Activated CD8-positive, alpha-beta T cell treated with anti-CD3 and anti-CD28 coated beads for 36 hours (primary cell): ENCODE measurements at regions of chr6 and their contacts with region 1.

Region 1: GRCh38 chr6:134822920-134823709 is 126.8 kb downstream of the ALDH8A1 start:
- DNase-seq: peak; percentile 51
- ATAC-seq: peak; percentile 90
- H3K4me3 Mint-ChIP-seq: no peak overlapping the region
- H3K27ac Mint-ChIP-seq: no peak overlapping the region
- H3K4me1 Mint-ChIP-seq: no peaks in the 10 kb centered on the region
- H3K27me3 Mint-ChIP-seq: peaks cover 3% of the 10 kb centered on the region
- CTCF ChIP-seq: peak; percentile 93

Region 2: GRCh38 chr6:134111062-134111677 is 711.9 kb before region 1 on chr6:
- CTCF ChIA-PET with region 1: interaction called, 12 read pairs
- POLR2A ChIA-PET with region 1: no interaction called
- intact Hi-C with region 1: no loop called
- DNase-seq: peak; percentile 66
- ATAC-seq: peak; percentile 85
- H3K4me3 Mint-ChIP-seq: no peak overlapping the region
- H3K27ac Mint-ChIP-seq: no peak overlapping the region
- H3K4me1 Mint-ChIP-seq: peaks cover 4% of the 10 kb centered on the region
- H3K27me3 Mint-ChIP-seq: peaks cover 7% of the 10 kb centered on the region
- CTCF ChIP-seq: peak; percentile 88

Region 3: GRCh38 chr6:134123666-134124208 is 699.4 kb before region 1 on chr6:
- CTCF ChIA-PET with region 1: interaction called, 25 read pairs
- POLR2A ChIA-PET with region 1: no interaction called
- intact Hi-C with region 1: loop called (anchors 10 kb)
- DNase-seq: peak; percentile 30
- ATAC-seq: peak; percentile 90
- H3K4me3 Mint-ChIP-seq: no peak overlapping the region
- H3K27ac Mint-ChIP-seq: no peak overlapping the region
- H3K4me1 Mint-ChIP-seq: peaks cover 2% of the 10 kb centered on the region
- H3K27me3 Mint-ChIP-seq: no peaks in the 10 kb centered on the region
- CTCF ChIP-seq: peak; percentile 91

Region 4: GRCh38 chr6:134145786-134146185 is 677.3 kb before region 1 on chr6:
- CTCF ChIA-PET with region 1: interaction called, 10 read pairs
- POLR2A ChIA-PET with region 1: no interaction called
- intact Hi-C with region 1: no loop called
- DNase-seq: no peak
- ATAC-seq: no peak
- H3K4me3 Mint-ChIP-seq: no peak overlapping the region
- H3K27ac Mint-ChIP-seq: no peak overlapping the region
- H3K4me1 Mint-ChIP-seq: no peaks in the 10 kb centered on the region
- H3K27me3 Mint-ChIP-seq: no peaks in the 10 kb centered on the region
- CTCF ChIP-seq: no peak

Region 5: DNA sequence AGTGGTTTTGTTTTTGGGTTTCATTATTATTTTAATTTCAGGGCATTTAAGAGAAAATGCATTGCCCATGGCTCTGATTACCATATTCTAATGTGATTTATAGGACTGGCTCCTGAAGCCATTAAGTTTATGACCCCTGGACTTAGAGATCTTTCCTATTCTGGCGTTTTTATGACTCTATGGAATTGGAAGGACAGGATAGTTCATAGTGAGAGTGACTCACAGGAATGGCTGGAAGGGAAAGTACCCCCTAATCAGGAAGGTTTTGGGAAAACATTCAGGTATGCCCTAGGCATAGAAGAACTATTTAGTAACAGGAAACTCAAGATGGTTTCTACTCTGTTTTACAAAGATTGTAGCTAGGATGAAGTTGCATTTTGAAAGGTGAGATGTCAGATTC is 662.1 kb before region 1 on chr6:
- CTCF ChIA-PET with region 1: interaction called, 36 read pairs
- POLR2A ChIA-PET with region 1: no interaction called
- intact Hi-C with region 1: loop called (anchors 2 kb)
- DNase-seq: no peak
- ATAC-seq: no peak
- H3K4me3 Mint-ChIP-seq: no peak overlapping the region
- H3K27ac Mint-ChIP-seq: no peak overlapping the region
- H3K4me1 Mint-ChIP-seq: no peaks in the 10 kb centered on the region
- H3K27me3 Mint-ChIP-seq: no peaks in the 10 kb centered on the region
- CTCF ChIP-seq: no peak

Region 6: GRCh38 chr6:134640975-134641429 is 182.1 kb before region 1 on chr6:
- CTCF ChIA-PET with region 1: interaction called, 13 read pairs
- POLR2A ChIA-PET with region 1: no interaction called
- intact Hi-C with region 1: no loop called
- DNase-seq: peak; percentile 86
- ATAC-seq: peak; percentile 94
- H3K4me3 Mint-ChIP-seq: no peak overlapping the region
- H3K27ac Mint-ChIP-seq: no peak overlapping the region
- H3K4me1 Mint-ChIP-seq: peaks cover 15% of the 10 kb centered on the region
- H3K27me3 Mint-ChIP-seq: no peaks in the 10 kb centered on the region
- CTCF ChIP-seq: peak; percentile 94

Region 7: GRCh38 chr6:134774201-134774638 is 48.9 kb before region 1 on chr6:
- CTCF ChIA-PET with region 1: no interaction called
- POLR2A ChIA-PET with region 1: no interaction called
- intact Hi-C with region 1: no loop called
- DNase-seq: no peak
- ATAC-seq: no peak
- H3K4me3 Mint-ChIP-seq: no peak overlapping the region
- H3K27ac Mint-ChIP-seq: no peak overlapping the region
- H3K4me1 Mint-ChIP-seq: no peaks in the 10 kb centered on the region
- H3K27me3 Mint-ChIP-seq: peaks cover 1% of the 10 kb centered on the region
- CTCF ChIP-seq: no peak

Region 8: GRCh38 chr6:134844120-134844519 is 21.0 kb after region 1 on chr6:
- CTCF ChIA-PET with region 1: no interaction called
- POLR2A ChIA-PET with region 1: no interaction called
- intact Hi-C with region 1: no loop called
- DNase-seq: no peak
- ATAC-seq: no peak
- H3K4me3 Mint-ChIP-seq: no peak overlapping the region
- H3K27ac Mint-ChIP-seq: no peak overlapping the region
- H3K4me1 Mint-ChIP-seq: no peaks in the 10 kb centered on the region
- H3K27me3 Mint-ChIP-seq: peaks cover 1% of the 10 kb centered on the region
- CTCF ChIP-seq: no peak